AG04449 (cell line): ENCODE measurements at regions of chr12 and their contacts with region 1.

Region 1: DNA sequence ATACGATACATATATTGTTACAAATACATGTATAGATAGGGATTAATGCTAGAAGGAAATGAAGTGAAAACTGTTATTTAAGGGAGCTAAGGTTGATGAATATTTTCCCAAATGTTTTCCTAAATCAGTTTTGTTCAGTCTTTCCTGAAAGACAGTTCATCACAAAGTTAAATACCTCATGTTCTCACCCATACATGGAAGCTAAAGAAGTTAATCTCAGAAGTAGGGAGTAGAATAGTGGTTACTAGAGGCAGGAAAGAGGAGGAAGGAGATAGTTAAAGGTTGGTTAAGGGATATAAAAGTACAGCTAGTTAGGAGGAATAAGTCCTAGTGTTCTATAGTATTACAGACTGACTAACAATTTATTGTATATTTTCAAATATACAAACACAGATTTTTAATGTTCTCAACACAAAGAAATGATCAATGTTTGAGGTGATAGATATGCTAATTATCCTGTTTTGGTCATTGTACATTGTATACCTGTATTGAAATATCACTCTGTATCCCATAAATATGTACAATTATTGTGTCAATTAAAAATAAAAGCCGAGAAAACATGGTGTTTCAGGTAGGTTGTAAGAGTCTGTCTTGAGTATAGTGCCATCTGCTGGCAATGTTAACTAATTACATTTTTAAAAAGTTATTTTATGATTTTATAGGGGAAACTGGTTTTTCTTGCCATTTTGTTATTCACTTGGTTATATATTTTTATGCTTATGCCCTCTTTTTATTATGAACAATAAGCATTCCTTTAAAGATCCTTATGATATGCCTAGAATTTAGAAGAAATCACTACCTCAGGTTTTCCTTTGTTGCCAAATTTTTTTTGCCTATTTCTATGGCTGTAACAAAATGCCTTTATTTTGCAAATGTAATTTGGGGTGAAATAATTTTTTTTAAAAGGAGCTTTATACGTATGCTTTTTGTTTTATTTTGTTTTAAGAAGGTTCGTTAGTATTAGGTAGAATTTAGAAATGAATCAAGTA is 26.9 kb downstream of the ZDHHC17 start:
- DNase-seq: no peak
- H3K4me3 ChIP-seq: no peak overlapping the region
- CTCF ChIP-seq: no peak

Region 2: GRCh38 chr12:76621582-76622024 is 169.3 kb before region 1 on chr12:
- CTCF ChIA-PET with region 1: interaction called, 195 read pairs
- POLR2A ChIA-PET with region 1: interaction called, 3 read pairs
- DNase-seq: no peak
- H3K4me3 ChIP-seq: no peak overlapping the region
- CTCF ChIP-seq: peak; percentile 75

Region 3: DNA sequence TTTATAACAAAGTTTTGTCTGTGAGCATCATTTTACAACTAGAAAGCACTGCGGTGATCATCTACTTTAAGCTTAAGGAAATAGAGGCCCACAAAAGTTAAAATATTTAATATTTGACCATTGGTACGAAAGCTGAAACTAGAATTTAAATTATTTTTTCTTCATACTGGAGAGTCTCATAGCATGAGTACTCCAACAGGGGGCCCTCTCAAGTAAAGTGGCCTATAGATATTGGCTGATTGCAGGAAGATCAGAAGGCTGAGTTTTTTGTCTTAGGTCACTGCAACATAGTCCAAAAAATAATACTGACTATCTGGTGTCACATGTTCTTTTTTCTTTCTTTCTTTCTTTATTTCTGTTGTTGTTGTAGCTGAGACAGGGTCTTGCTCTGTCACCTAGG is 102.2 kb before region 1 on chr12:
- CTCF ChIA-PET with region 1: interaction called, 11 read pairs
- POLR2A ChIA-PET with region 1: no interaction called
- DNase-seq: no peak
- H3K4me3 ChIP-seq: no peak overlapping the region
- CTCF ChIP-seq: no peak

Region 4: GRCh38 chr12:76777765-76778216 is 13.1 kb before region 1 on chr12:
- CTCF ChIA-PET with region 1: interaction called, 32 read pairs
- POLR2A ChIA-PET with region 1: no interaction called
- DNase-seq: no peak
- H3K4me3 ChIP-seq: no peak overlapping the region
- CTCF ChIP-seq: no peak

Region 5: GRCh38 chr12:76810671-76811419 is 20.0 kb after region 1 on chr12:
- CTCF ChIA-PET with region 1: interaction called, 24 read pairs
- POLR2A ChIA-PET with region 1: no interaction called
- DNase-seq: no peak
- H3K4me3 ChIP-seq: no peak overlapping the region
- CTCF ChIP-seq: no peak